Left cardiac atrium (tissue), 4 donors: ENCODE measurements at regions of chr15 and their contacts with region 1.

Region 1: DNA sequence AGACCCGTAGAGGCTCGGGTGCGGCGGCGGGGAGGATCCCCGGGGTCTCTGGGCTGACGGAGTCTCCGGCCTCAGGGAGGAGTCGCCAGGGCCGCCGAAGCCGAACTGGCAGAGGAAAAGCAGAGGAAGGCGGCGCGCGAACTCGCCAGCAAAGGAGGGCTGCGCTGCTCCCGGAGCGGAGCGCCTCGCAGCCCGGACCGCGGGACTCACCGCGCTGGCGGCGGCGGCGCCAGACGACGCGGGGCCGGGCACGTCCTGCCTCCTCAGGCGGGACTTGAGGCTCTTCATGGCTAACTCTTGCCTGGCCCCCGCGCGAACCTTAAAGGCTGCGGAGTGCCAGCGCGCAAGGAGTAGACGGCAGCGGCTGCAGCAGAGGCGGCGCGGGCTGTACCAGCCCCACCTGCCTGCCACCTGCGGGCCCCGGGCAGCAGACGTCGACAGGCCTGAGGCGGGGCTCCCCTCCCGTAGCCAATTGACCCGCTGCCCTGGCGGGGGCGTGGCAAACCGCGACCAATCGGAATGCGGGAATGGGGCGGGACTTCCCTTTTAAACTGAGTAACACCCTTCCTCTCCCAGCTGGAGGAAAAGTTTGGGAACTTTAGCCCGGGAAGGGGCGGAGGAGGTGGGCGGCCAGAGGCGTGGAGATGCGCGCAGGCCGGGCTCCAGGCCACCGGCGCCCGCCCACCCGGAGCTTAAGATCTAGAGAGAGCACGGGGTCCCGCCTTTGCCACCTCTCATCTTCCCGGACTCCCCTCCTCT is at the start of gene UACA:
- DNase-seq: peak; percentile 95
- ATAC-seq: peak; percentile 98
- total RNA-seq, gene UACA: 28.2 to 37.6 TPM

Region 2: DNA sequence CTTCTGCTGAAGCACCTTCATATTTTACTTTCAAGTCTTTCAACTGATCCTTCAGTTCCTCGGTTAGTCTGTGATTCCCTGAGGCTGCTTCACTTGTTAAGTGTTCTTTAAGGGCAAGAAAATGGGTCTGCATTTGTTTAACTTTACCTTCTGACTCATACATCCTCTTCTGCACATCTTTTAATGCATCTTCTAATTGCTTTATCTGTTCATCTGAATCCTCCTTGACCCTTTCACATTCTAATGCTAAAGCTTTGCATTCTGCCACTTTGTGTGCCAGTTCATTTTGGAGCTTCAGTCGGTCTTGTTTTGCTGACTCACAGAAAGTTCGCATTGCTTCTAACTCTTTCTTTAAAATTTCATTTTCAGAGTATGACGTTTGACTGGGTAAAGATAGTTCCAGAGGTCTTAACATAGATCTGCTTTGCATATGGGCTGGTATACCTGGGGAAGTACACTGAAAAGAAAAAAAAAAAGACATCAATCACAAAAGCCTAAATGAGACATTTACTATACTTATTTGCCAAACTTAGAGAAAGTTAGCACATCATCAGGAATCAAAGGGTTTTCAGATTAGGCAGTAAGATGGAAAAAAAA is 94.2 kb before region 1 on chr15:
- intact Hi-C with region 1: no loop called
- DNase-seq: no peak
- ATAC-seq: no peak

Region 3: GRCh38 chr15:70690491-70691257 is 72.6 kb before region 1 on chr15:
- intact Hi-C with region 1: loop called in 1 of 2 experiments (anchors 10 kb)
- DNase-seq: no peak
- ATAC-seq: no peak

Region 4: DNA sequence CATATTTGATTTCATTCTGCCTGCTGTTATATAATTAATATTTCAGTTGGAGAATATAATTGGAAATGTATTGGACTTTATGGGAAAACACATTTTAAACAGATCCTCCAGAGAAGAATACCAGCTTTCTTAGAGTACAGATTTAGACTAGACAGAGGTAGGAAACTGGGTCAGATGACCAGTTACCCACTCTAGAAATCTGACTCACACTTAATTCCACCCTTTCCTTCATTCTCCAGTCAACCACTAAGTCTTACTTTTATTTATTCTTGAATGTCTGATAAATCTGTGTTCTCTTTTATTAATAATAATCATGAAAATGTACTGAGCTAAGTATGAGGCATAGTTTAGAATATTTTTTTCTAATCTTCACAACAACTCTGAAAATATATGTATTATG is 240.0 kb after region 1 on chr15:
- intact Hi-C with region 1: no loop called
- DNase-seq: no peak
- ATAC-seq: no peak

Region 5: DNA sequence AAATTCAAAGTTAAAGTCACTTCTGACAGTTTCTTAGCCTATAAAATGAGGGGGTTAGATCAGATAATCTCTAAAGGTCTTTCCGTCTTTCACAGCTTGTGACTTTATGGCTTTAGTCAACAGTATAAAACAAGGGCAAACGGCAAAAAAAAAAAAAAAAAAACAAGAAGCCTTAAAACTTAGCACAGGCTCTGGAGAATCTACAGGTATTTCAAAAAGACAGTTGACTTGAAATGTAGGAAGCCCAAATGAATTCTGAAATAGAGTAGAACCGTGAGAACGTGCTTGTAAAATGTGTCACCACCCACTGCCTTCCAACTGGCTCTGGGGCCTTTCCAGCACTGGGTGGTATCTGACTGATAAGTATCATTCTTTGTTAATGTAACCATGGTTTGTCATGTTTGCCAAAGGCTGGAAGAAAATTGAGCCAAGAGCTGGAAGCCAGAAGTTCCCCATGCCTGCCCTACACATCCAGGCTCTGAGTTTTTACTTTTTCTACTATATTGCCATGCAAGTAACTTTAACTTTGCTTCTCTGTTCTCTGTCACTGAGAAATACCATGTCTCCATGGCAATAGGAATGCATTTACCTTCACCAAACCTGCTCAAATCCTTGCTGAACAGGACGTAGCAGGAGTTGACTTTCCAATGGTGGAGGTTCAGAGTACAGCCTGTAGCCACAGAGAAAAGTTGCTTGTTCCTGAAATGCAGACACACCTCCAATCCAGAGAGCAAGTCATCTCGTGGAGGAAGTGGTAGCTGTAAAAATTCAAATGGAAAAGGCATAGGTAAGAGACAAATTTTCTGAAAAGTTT is 316.1 kb after region 1 on chr15:
- intact Hi-C with region 1: no loop called
- DNase-seq: peak; percentile 51
- ATAC-seq: peak; percentile 57 to 63